B cell (primary cell): ENCODE measurements at regions of chr11 and their contacts with region 1.

Region 1: GRCh38 chr11:14907411-14908213 is 15.6 kb upstream of the CYP2R1 start:
- DNase-seq: peak; percentile 85
- ATAC-seq: peak; percentile 37
- H3K4me3 ChIP-seq: no peak overlapping the region
- H3K4me3 Mint-ChIP-seq: no peak overlapping the region
- H3K27ac ChIP-seq: no peak overlapping the region
- H3K27ac Mint-ChIP-seq: peak overlapping the region; percentile 70
- H3K4me1 ChIP-seq: peaks cover 32 to 44% of the 10 kb centered on the region in 2 donors
- H3K4me1 Mint-ChIP-seq: peaks cover 45% of the 10 kb centered on the region
- H3K27me3 ChIP-seq: peaks cover 0 to 4% (median 0%) of the 10 kb centered on the region in 4 experiments
- H3K27me3 Mint-ChIP-seq: peaks cover 2% of the 10 kb centered on the region
- CTCF ChIP-seq: peak; percentile 81

Region 2: GRCh38 chr11:14223636-14224288 is 683.9 kb before region 1 on chr11:
- CTCF ChIA-PET with region 1: no interaction called
- POLR2A ChIA-PET with region 1: no interaction called
- intact Hi-C with region 1: no loop called
- DNase-seq: no peak
- ATAC-seq: no peak
- H3K4me3 ChIP-seq: no peak overlapping the region
- H3K4me3 Mint-ChIP-seq: no peak overlapping the region
- H3K27ac ChIP-seq: no peak overlapping the region
- H3K27ac Mint-ChIP-seq: no peak overlapping the region
- H3K4me1 ChIP-seq: peaks cover 6% of the 10 kb centered on the region in 2 donors
- H3K4me1 Mint-ChIP-seq: peaks cover 9% of the 10 kb centered on the region
- H3K27me3 ChIP-seq: peaks cover 0 to 2% (median 0%) of the 10 kb centered on the region in 4 experiments
- H3K27me3 Mint-ChIP-seq: peaks cover 9% of the 10 kb centered on the region
- CTCF ChIP-seq: no peak

Region 3: GRCh38 chr11:14300661-14301304 is 606.8 kb before region 1 on chr11:
- CTCF ChIA-PET with region 1: interaction called, 12 read pairs
- POLR2A ChIA-PET with region 1: no interaction called
- intact Hi-C with region 1: no loop called
- DNase-seq: peak; percentile 75
- ATAC-seq: peak; percentile 93
- H3K4me3 ChIP-seq: no peak overlapping the region
- H3K4me3 Mint-ChIP-seq: no peak overlapping the region
- H3K27ac ChIP-seq: no peak overlapping the region
- H3K27ac Mint-ChIP-seq: no peak overlapping the region
- H3K4me1 ChIP-seq: peaks cover 45 to 64% of the 10 kb centered on the region in 2 donors
- H3K4me1 Mint-ChIP-seq: peaks cover 59% of the 10 kb centered on the region
- H3K27me3 ChIP-seq: no peaks in the 10 kb centered on the region
- H3K27me3 Mint-ChIP-seq: no peaks in the 10 kb centered on the region
- CTCF ChIP-seq: peak; percentile 80

Region 4: DNA sequence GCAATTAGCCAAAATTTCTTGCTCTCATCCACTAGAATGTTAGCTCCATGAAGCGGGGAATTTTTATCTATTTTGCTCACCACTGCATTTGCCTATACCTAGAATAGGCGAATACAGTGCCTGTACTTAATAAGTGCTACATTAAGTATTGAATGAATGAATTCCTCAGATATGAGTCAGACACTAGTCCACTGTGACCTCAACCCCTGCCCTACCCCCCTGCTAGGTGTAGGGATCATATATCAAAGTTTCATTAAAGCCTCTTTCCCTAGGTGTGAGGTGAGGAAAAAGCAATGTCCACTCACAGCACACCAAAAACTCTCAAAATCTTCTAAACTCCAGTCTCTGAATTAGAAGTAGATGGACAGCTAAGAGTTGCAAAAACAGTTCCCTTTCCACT is 377.7 kb before region 1 on chr11:
- CTCF ChIA-PET with region 1: interaction called, 76 read pairs
- POLR2A ChIA-PET with region 1: no interaction called
- intact Hi-C with region 1: no loop called
- DNase-seq: no peak
- ATAC-seq: no peak
- H3K4me3 ChIP-seq: no peak overlapping the region
- H3K4me3 Mint-ChIP-seq: no peak overlapping the region
- H3K27ac ChIP-seq: no peak overlapping the region
- H3K27ac Mint-ChIP-seq: no peak overlapping the region
- H3K4me1 ChIP-seq: no peaks in the 10 kb centered on the region
- H3K4me1 Mint-ChIP-seq: no peaks in the 10 kb centered on the region
- H3K27me3 ChIP-seq: no peaks in the 10 kb centered on the region
- H3K27me3 Mint-ChIP-seq: no peaks in the 10 kb centered on the region
- CTCF ChIP-seq: no peak

Region 5: DNA sequence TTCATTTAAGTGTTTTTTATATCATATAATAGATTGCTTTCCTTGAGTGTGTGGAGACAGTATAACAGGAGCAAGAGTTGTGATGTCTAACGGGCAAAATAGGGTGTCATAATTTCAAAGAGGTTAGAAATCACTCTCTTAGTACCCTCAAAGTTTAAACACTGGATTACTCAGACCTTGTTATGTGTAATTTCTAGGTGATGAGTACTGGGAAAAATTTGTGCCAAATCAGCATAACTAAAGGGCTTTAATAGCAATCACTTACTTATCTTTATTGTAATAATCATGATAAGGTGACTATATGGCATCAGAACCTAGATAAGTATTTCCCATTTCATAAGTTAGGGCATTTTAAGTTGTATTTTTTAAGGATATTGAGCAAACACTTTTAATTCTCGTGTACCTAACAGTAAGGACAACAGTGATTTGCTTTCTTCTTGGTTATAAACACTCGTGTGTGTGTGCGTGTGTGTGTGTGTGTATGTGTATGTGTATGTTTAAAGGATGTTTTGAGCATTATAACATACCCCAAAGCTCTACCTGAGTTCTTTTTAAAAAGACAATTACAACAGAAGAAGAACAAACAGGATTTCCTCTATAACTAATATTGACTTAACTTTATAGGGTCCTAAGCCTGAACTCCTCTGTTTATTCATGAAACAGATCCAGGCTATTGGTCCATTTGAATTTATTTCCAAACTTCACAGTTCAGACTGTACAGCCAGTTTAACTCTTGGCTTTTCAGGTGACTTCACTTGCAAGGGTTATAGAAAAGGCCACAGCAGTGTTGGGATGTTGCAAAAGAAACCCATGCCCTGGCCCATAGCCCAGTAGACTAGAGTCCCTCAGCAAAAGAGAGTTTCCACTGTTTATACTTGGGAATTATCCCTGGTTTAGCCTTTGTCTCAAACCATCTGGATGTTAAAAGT is 287.7 kb before region 1 on chr11:
- CTCF ChIA-PET with region 1: interaction called, 20 read pairs
- POLR2A ChIA-PET with region 1: no interaction called
- intact Hi-C with region 1: no loop called
- DNase-seq: no peak
- ATAC-seq: no peak
- H3K4me3 ChIP-seq: no peak overlapping the region
- H3K4me3 Mint-ChIP-seq: no peak overlapping the region
- H3K27ac ChIP-seq: no peak overlapping the region
- H3K27ac Mint-ChIP-seq: no peak overlapping the region
- H3K4me1 ChIP-seq: peaks cover 3% of the 10 kb centered on the region in 2 donors
- H3K4me1 Mint-ChIP-seq: peaks cover 3% of the 10 kb centered on the region
- H3K27me3 ChIP-seq: no peaks in the 10 kb centered on the region
- H3K27me3 Mint-ChIP-seq: peaks cover 3% of the 10 kb centered on the region
- CTCF ChIP-seq: no peak

Region 6: GRCh38 chr11:14789879-14790484 is 117.6 kb before region 1 on chr11:
- CTCF ChIA-PET with region 1: interaction called, 214 read pairs
- POLR2A ChIA-PET with region 1: interaction called, 3 read pairs
- intact Hi-C with region 1: loop called (anchors 1 kb)
- DNase-seq: peak; percentile 42
- ATAC-seq: no peak
- H3K4me3 ChIP-seq: no peak overlapping the region
- H3K4me3 Mint-ChIP-seq: no peak overlapping the region
- H3K27ac ChIP-seq: no peak overlapping the region
- H3K27ac Mint-ChIP-seq: no peak overlapping the region
- H3K4me1 ChIP-seq: no peaks in the 10 kb centered on the region
- H3K4me1 Mint-ChIP-seq: no peaks in the 10 kb centered on the region
- H3K27me3 ChIP-seq: no peaks in the 10 kb centered on the region
- H3K27me3 Mint-ChIP-seq: no peaks in the 10 kb centered on the region
- CTCF ChIP-seq: peak; percentile 78

Region 7: DNA sequence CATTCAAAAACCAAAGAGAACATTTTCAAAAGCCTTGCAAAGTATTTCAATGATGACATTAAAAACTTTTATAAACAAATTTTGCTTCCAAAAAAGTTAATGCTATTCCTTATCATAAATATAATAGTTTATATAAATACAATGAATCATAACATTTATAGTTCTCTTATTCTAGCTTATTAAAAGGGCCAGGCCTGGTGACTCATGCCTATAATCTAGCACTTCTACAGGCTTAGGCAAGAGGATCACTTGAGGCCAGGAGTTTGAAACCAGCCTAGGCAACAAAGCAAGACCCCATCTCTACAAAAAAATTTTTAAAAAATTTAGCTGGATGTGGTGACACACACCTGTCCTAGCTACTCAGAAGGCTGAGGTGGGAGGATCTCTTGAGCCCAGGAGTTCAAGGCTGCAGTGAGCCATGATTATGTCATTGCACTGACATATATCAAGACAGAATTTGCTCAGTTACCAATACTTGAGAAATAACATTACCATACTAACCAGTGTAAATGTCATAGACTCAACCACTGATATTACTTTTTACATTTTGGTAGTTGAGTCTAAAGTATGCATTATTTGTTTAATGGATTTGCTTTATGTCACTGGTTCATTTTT is 72.0 kb before region 1 on chr11:
- CTCF ChIA-PET with region 1: no interaction called
- POLR2A ChIA-PET with region 1: no interaction called
- intact Hi-C with region 1: no loop called
- DNase-seq: no peak
- ATAC-seq: no peak
- H3K4me3 ChIP-seq: no peak overlapping the region
- H3K4me3 Mint-ChIP-seq: no peak overlapping the region
- H3K27ac ChIP-seq: no peak overlapping the region
- H3K27ac Mint-ChIP-seq: no peak overlapping the region
- H3K4me1 ChIP-seq: no peaks in the 10 kb centered on the region
- H3K4me1 Mint-ChIP-seq: no peaks in the 10 kb centered on the region
- H3K27me3 ChIP-seq: no peaks in the 10 kb centered on the region
- H3K27me3 Mint-ChIP-seq: peaks cover 7% of the 10 kb centered on the region
- CTCF ChIP-seq: no peak

Region 8: DNA sequence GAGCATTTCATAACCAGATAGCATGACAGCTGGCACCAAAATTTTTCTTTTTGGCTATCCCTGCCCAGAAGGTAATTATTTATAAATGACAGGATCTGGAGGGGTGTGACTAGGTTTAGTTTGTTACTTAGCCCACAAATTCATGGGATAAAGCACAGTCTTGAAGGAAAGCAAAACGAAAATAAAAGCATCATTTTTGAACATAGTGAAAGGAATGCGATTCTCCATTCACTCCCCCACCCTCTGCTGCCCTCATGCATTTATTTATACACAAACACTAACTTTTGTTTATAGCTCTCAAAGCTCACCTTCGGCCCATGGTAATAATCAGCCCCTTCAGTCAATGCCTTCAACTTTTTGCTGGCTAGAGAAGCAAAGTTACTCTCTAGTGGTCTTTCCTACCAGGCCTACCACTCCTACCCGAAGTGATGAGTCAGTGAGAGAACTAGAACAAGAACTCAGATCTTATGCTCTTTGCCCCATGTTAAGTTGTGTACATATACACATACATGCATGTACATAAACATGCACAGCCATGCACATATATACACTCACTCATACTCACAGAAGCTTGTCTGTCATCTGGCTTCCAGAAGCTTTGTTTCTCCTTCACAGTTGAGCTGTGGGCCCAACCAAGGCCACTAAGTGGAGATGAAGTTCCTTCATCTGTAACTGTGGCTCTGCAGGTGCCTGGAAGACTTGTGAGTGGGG is 42.0 kb after region 1 on chr11:
- CTCF ChIA-PET with region 1: interaction called, 12 read pairs
- POLR2A ChIA-PET with region 1: no interaction called
- intact Hi-C with region 1: no loop called
- DNase-seq: no peak
- ATAC-seq: no peak
- H3K4me3 ChIP-seq: no peak overlapping the region
- H3K4me3 Mint-ChIP-seq: no peak overlapping the region
- H3K27ac ChIP-seq: no peak overlapping the region
- H3K27ac Mint-ChIP-seq: no peak overlapping the region
- H3K4me1 ChIP-seq: no peaks in the 10 kb centered on the region
- H3K4me1 Mint-ChIP-seq: no peaks in the 10 kb centered on the region
- H3K27me3 ChIP-seq: no peaks in the 10 kb centered on the region
- H3K27me3 Mint-ChIP-seq: peaks cover 11% of the 10 kb centered on the region
- CTCF ChIP-seq: no peak

Region 9: DNA sequence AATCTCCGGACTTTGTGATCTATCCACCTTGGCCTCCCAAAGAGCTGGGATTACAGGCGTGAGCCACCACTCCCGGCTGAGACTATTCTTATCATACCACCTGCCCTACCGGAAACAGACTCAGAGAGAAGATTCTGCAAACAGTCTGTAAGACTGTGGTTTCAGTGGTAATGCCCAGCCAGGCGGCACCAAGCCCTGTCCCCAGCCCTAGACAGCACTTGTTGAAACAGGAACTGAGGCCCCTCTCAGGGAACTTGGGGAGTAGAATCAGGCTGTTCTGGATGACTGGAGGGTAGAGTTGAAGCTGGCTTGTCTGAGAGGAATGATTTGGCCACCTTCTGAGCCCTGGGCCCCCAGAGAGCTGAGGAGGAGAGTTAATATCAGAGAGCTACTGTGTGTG is 205.8 kb after region 1 on chr11:
- CTCF ChIA-PET with region 1: interaction called, 127 read pairs
- POLR2A ChIA-PET with region 1: interaction called, 7 read pairs
- intact Hi-C with region 1: loop called (anchors 1 kb)
- DNase-seq: peak; percentile 87
- ATAC-seq: peak; percentile 92
- H3K4me3 ChIP-seq: peak overlapping the region in 1 of 5 experiments; percentile 31
- H3K4me3 Mint-ChIP-seq: peak overlapping the region; percentile 92
- H3K27ac ChIP-seq: peak overlapping the region in 1 of 2 donors; percentile 44
- H3K27ac Mint-ChIP-seq: peak overlapping the region; percentile 89
- H3K4me1 ChIP-seq: peaks cover 61 to 78% of the 10 kb centered on the region in 2 donors
- H3K4me1 Mint-ChIP-seq: peaks cover 71% of the 10 kb centered on the region
- H3K27me3 ChIP-seq: peaks cover 0 to 29% (median 8%) of the 10 kb centered on the region in 4 experiments
- H3K27me3 Mint-ChIP-seq: peaks cover 19% of the 10 kb centered on the region
- CTCF ChIP-seq: no peak